Right ventricle myocardium inferior (tissue), 1 donor: ENCODE measurements at regions of chr6 and their contacts with region 1.

Region 1: GRCh38 chr6:138817822-138818308 is 22.0 kb downstream of the ECT2L start:
- DNase-seq: no peak
- ATAC-seq: no peak

Region 2: DNA sequence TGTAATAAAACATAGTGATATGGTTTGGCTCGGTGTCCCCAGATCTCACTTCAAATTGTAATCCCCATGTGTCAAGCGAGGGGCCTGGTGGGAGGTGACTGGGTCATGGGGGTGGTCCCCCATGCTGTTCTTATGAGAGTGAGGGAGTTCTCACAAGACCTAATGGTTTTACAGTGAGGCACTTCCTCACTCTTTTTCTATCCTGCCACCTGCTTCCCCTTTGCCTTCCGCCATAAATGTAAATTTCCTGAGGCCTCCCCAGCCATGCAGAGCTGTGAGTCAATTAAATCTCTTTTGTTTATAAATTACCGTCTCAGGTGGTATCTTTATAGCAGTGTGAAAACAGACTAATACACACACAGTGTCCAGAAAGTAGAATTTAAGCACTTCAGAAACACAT is 91.6 kb after region 1 on chr6:
- intact Hi-C with region 1: loop called (anchors 10 kb)
- DNase-seq: no peak
- ATAC-seq: no peak

Region 3: DNA sequence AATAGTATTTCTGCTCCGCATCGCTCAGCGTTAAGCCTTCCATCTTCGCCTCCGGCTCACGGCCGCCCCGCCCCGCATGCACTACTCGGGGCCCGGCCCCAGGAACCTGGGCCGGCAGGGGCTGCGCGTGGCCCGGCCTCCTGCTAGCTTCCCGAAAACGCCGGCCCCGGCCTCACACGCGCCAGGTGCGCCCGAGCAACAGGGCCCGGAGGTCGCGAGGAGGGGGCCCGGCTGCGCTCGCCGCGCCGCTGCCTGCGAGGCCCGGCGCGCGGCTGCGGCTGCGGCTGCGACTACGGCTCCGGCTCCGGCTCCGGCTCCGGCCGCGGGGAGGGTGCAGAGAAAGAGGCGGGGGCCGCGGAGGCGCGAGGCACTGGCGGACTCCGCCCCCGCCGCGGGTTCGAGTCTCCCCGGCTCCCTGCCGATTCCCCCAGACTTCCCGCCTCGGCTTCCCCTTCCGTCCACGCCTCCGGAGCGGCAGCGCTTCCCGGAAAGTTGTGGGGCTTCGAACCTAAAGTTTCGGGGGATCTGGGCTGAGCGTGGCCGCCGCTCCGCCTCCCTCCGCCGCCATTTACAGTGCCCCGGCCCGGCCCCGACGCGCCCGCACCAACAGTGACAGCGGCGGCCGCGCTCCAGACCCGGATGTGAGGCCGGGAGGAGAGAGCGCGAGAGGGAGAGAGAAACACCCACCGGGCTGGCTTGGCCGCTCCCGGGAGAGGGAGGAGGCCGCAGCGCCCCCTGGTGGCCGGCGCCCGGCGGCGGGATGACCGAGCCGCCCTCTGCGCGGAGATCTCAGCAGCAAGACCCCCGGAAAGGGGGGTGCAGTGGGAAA is 170.0 kb after region 1 on chr6 and contains the start of gene REPS1:
- intact Hi-C with region 1: loop called (anchors 1 kb)
- DNase-seq: peak; percentile 97
- ATAC-seq: peak; percentile 96
- total RNA-seq, gene REPS1: 31.1 TPM

Region 4: GRCh38 chr6:139117734-139118133 is 299.9 kb after region 1 on chr6:
- intact Hi-C with region 1: loop called (anchors 10 kb)
- DNase-seq: no peak
- ATAC-seq: no peak

Region 5: DNA sequence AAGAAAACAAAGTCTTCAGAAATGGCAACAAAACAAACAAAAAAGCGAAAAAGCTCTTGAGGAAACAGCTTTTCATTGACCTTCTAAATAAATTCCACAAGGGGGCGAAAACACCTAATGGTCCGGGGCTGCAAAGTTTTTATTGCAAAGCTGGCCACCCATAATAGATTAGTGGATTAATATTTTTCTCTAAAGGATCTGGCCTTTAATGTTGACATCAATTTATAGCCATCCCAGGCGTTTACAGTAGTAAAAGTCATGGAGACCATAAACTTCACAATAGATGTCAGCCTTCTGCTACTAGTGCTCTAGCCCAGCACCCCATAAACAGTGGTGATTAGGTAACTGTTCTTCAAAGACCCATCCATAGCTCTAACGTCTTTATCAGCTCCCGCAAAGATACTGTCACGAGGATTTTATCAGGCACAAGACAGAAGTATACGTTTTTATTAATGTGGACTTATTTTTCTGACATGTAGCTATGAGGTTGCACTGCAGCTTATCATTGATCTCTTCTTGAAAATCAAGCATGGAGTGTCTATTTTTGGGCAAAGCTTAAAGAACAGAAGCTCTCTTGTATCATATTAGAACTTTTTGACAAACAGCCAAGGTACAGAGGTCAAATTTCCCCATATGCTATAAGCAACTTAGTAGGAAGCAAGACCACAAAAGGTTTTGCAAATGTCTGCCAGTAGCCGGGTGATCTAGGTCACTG is 551.9 kb after region 1 on chr6:
- intact Hi-C with region 1: loop called (anchors 5 kb)
- DNase-seq: no peak
- ATAC-seq: no peak